CD8-positive, alpha-beta T cell (primary cell): ENCODE measurements at regions of chr7 and their contacts with region 1.

Region 1: DNA sequence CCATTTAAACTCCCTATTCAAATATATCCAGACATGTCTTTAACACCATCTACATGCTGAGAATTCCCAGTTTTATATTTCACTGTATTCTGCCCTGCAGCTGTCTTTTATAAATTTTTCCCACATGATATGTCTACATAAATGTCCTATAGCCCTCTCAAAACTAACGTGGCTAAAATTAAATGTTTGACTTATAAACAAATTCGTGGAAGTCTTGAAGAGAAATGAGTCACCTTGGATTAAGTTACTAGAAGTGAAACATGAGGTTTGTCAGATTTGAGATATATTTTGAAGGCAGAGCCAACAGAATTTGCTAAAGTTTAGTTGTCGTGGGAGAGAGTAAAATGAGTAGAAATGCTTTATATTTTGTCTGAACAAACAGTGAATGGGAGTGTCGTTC is 386.9 kb upstream of the CNTNAP2 start:
- DNase-seq: no peak
- ATAC-seq: no peak
- H3K4me3 ChIP-seq: no peak overlapping the region
- H3K4me3 Mint-ChIP-seq: no peak overlapping the region
- H3K27ac ChIP-seq: no peak overlapping the region
- H3K27ac Mint-ChIP-seq: no peak overlapping the region
- H3K4me1 ChIP-seq: no peaks in the 10 kb centered on the region
- H3K4me1 Mint-ChIP-seq: no peaks in the 10 kb centered on the region
- H3K27me3 ChIP-seq: no peaks in the 10 kb centered on the region
- H3K27me3 Mint-ChIP-seq: no peaks in the 10 kb centered on the region
- CTCF ChIP-seq: no peak

Region 2: DNA sequence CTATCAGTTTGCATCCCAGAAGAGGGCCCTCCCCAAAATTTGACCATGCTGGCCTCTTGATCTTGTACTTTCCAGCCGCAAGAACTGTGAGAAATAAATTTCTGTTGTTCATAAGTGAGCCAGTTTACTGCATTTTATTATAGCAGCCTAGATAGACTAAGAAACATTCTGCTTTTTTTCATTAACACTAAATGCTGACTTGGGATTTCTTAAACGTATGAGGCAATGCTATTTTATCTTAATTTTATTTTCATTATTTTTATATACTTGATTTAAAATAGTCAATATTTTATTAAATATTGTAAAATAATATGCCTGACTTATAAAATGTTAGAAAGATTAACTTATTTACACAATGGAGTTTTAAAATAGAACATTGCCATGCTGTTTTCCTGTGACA is 45.1 kb after region 1 on chr7:
- CTCF ChIA-PET with region 1: no interaction called
- POLR2A ChIA-PET with region 1: no interaction called
- intact Hi-C with region 1: loop called in 1 of 2 experiments (anchors 1 kb)
- DNase-seq: no peak
- ATAC-seq: no peak
- H3K4me3 ChIP-seq: no peak overlapping the region
- H3K4me3 Mint-ChIP-seq: no peak overlapping the region
- H3K27ac ChIP-seq: no peak overlapping the region
- H3K27ac Mint-ChIP-seq: no peak overlapping the region
- H3K4me1 ChIP-seq: no peaks in the 10 kb centered on the region
- H3K4me1 Mint-ChIP-seq: no peaks in the 10 kb centered on the region
- H3K27me3 ChIP-seq: no peaks in the 10 kb centered on the region
- H3K27me3 Mint-ChIP-seq: no peaks in the 10 kb centered on the region
- CTCF ChIP-seq: no peak